Left ventricle myocardium superior (tissue), 1 donor: ENCODE measurements at regions of chr18 and their contacts with region 1.

Region 1: DNA sequence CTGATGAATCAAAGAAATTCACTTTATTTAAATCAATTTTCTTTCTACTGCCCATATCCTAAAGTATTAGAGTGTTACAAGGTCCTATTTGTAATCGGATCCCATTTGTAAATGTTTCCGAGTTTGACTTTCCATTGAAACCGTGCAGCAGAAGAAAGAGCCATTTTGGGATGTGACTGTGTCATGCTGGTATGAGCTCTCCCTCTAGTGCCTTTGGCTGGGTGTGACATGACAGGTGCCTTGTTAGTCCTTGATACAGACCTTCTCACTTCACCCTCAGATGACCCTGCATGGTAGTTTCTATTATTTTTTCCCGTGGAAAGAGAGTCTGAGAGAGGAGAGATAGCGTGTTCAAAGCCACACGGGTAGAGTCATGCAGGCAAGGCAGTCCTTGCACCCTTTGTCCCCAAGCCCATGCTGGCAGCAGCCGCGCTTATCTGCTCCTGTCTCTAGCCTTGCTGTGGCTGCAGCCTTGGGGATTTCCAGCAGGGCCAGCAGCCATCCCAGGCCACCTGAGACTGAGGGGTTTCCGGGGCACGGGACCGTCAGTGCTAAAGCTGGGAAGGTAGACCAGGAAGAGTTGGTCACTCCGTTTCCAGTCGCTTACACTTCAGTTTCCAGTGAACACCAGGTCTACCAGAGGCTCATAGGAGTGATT is 21.4 kb downstream of the CHMP1B start:
- DNase-seq: peak; percentile 41
- ATAC-seq: peak; percentile 97

Region 2: GRCh38 chr18:11733031-11733430 is 139.6 kb before region 1 on chr18:
- intact Hi-C with region 1: loop called (anchors 2 kb)
- DNase-seq: peak; percentile 87
- ATAC-seq: peak; percentile 94